Testis (tissue), 5 donors: ENCODE measurements at regions of chr1 and their contacts with region 1.

Region 1: DNA sequence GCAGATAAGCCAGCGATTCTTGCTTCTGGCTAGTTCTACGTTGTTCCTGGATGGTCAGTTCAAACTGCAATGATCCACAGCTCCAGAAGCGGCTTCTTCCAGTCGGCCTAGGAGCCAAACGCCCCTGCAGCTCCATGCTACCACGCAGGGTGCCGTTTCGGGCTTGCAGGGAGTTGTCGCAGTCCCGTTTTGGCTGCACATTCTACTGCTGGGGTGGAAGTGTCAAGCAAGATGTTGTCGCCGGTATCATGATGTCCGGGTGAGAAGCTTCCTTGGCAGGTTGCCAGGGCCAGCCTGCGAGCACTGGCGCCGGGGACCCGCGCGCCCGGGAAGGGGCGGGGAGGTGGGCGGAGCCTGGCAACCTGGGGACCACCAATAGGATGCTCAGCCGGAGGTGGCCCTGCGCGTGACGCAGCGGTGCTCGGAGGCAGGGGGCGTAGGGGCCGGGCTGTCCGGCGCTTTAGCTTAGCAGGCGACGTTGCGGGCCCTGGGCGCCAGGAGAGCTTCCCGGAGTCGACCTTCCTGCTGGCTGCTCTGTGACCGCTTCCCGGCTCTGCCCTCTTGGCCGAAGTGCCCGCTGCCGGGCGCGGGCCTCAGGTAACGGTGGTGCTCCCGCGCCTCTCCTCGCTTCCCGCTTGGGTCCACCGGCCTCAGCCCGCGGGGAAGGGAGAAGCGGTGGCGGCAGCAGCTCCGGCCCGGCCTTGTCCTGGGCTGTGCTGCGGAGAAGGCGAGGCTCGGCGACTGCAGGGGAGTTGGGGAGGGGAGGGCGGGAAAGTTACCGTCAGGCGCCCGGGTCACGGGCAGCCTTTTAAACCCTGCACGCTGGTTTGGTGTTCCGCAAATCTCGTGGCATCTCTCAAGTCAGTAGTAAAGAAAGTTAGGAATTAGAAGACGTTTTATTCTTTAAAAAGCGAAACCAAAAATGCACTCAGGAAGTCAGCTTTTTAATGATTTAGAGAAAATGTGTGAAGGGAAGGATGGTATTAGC is at the start of gene SOAT1:
- DNase-seq: peak; percentile 98
- H3K4me3 ChIP-seq: peak within 1 kb of the TSS; percentile 91 to 93
- H3K27ac ChIP-seq: peak within 1 kb of the TSS; percentile 94
- H3K4me1 ChIP-seq: peaks cover 17% of the 10 kb centered on the region
- H3K27me3 ChIP-seq: no peaks in the 10 kb centered on the region
- CTCF ChIP-seq: peak in 1 of 3 experiments; percentile 11
- POLR2A ChIP-seq: peak; percentile 9
- total RNA-seq, gene SOAT1: 24.1 to 25.5 TPM

Region 2: GRCh38 chr1:179241523-179242097 is 52.0 kb before region 1 on chr1:
- intact Hi-C with region 1: no loop called
- DNase-seq: no peak
- H3K4me3 ChIP-seq: no peak overlapping the region
- H3K27ac ChIP-seq: no peak overlapping the region
- H3K4me1 ChIP-seq: no peaks in the 10 kb centered on the region
- H3K27me3 ChIP-seq: no peaks in the 10 kb centered on the region
- CTCF ChIP-seq: no peak
- POLR2A ChIP-seq: no peak

Region 3: GRCh38 chr1:179353546-179353945 is 59.9 kb after region 1 on chr1:
- intact Hi-C with region 1: no loop called
- DNase-seq: peak; percentile 59
- H3K4me3 ChIP-seq: no peak overlapping the region
- H3K27ac ChIP-seq: peak overlapping the region in 1 of 2 donors; percentile 44
- H3K4me1 ChIP-seq: no peaks in the 10 kb centered on the region
- H3K27me3 ChIP-seq: no peaks in the 10 kb centered on the region
- CTCF ChIP-seq: no peak
- POLR2A ChIP-seq: no peak

Region 4: DNA sequence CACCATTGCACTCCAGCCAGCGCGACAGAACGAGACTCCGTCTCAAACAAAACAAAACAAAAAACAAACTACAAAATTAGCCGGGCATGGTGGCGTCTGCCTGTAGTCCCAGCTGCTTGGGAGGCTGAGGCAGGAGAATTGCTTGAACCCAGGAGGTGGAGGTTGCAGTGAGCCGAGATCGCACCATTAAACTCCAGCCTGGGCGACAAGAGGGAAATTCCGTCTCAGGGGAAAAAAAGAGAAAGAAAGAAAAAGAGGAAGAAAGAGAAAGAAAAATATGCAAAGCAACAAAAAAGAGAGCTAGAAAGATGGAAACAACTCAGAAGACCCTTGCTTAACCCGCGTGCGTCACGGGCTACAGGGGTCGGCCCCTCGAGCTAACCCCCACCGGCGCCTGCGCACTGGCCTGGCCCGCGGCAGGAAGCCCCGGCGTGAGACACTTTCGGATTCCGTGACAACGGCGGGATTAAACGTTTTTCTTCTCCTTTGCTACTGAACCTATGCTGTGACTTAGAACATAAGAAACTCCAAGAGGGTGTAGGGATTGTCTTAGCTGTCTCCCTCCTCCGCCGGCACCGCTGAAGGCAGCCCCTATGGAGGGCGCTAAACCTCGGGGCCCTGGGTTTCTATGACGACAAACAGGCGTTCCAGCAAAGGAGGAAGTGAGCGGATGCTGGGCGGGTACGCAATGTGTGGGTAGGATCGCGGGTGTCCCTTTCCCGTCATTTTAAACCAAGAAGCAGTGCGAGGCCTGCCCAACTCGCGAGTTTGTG is 71.9 kb after region 1 on chr1 and contains the start of gene AXDND1:
- intact Hi-C with region 1: loop called (anchors 5 kb)
- DNase-seq: peak; percentile 95
- H3K4me3 ChIP-seq: peak within 1 kb of the TSS; percentile 73 to 84
- H3K27ac ChIP-seq: peak within 1 kb of the TSS; percentile 89 to 98
- H3K4me1 ChIP-seq: no peaks in the 10 kb centered on the region
- H3K27me3 ChIP-seq: no peaks in the 10 kb centered on the region
- CTCF ChIP-seq: peak in 1 of 3 experiments; percentile 15
- POLR2A ChIP-seq: peak; percentile 15
- total RNA-seq, gene AXDND1: 31.5 to 58.3 TPM

Region 5: DNA sequence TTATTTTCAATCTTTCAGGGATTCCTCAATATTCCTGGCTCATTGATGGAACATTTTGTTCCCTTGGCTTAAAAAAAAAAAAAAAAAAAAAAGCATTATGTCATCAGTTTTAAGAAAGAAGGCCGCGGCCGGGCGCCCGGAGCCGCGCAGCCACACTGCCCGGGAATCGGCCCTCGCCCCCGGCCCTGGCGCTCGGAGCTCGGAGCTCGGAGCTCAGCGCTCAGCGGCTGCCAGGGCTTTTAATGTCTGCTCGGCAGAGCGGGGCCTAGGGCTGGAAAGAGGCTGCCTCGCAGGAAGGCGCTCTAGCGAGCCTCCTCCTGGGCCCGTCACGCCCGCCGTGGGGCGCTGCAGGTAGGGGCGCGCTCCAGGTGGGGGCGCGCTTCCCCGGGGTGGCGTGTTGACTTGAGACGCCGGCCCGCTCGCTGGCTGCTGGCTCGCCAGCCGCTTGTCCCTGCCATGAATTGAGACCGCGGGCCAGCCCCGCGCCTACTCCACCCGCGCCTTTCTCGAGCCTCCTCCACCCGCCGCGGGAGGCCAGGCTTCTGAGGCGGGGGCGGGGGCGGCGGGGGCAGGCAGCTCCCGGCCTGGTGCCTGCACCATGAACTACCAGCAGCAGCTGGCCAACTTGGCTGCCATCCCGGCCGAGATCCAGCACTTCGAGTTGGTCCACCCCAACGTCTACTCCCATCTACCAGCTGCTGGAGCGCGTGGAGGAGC is 292.6 kb after region 1 on chr1:
- intact Hi-C with region 1: no loop called
- DNase-seq: peak; percentile 83
- H3K4me3 ChIP-seq: peak overlapping the region; percentile 55
- H3K27ac ChIP-seq: peak overlapping the region; percentile 71 to 90
- H3K4me1 ChIP-seq: no peaks in the 10 kb centered on the region
- H3K27me3 ChIP-seq: no peaks in the 10 kb centered on the region
- CTCF ChIP-seq: peak; percentile 47 to 73 (median 62)
- POLR2A ChIP-seq: no peak